Aorta (tissue), 5 donors: ENCODE measurements at regions of chr2 and their contacts with region 1.

Region 1: DNA sequence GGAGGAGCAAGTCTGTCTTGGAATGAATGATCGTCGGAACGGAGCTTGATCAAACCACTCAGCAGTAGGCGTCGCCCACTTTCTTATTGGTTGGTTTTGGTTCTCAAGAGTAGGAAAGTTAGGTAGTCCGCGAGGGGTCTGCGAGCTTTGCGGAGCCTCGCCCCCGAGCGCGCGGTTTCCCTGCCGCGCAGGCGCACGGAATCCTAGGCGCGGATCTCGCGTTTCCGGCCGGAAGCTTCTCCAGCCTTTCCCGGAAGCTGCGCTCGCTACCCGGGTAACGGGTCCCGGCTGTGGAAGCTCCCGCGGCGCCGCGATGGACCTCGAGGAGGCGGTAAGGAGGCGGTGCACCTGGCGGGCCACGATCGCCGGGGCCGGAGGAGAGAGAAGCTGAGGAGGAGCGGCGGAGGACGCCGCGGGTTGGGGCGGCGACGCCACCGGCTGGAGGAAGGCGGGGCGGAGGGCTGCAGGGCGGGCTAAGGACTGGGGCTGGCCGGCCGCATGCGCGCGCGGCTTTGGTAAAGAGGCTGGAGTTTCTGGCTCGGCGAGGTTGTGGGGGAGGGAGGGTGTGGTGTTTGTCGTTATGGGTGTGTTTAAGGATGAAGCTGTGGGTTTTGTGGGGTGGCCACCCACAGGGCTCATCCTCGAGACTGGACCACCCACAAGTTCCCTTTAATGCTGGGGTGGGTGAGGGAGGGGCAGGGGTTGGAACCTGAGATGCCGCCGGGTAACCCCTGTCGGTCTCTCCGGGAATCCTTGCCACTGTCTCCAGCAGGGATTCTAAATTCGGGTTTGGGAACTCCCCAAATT is at the start of gene TAF1B:
- DNase-seq: peak; percentile 92 to 95
- ATAC-seq: peak; percentile 97
- H3K4me3 ChIP-seq: peak within 1 kb of the TSS; percentile 51 to 68
- H3K27ac ChIP-seq: peak within 1 kb of the TSS in 1 of 2 donors; percentile 28
- H3K4me1 ChIP-seq: no peaks in the 10 kb centered on the region
- H3K27me3 ChIP-seq: no peaks in the 10 kb centered on the region
- total RNA-seq, gene TAF1B: 18.1 to 21.9 TPM

Region 2: GRCh38 chr2:9708683-9709538 is 134.5 kb before region 1 on chr2:
- intact Hi-C with region 1: no loop called
- DNase-seq: no peak
- ATAC-seq: no peak
- H3K4me3 ChIP-seq: no peak overlapping the region
- H3K27ac ChIP-seq: no peak overlapping the region
- H3K4me1 ChIP-seq: no peaks in the 10 kb centered on the region
- H3K27me3 ChIP-seq: no peaks in the 10 kb centered on the region

Region 3: GRCh38 chr2:9951272-9951972 is 108.0 kb after region 1 on chr2 and contains the start of gene GRHL1:
- intact Hi-C with region 1: loop called in 1 of 2 experiments (anchors 5 kb)
- DNase-seq: peak; percentile 95 to 97
- ATAC-seq: peak; percentile 97
- H3K4me3 ChIP-seq: peak within 1 kb of the TSS; percentile 62 to 91
- H3K27ac ChIP-seq: no peak within 1 kb of the TSS
- H3K4me1 ChIP-seq: no peaks in the 10 kb centered on the region
- H3K27me3 ChIP-seq: no peaks in the 10 kb centered on the region
- total RNA-seq, gene GRHL1: 1.6 to 2.5 TPM